Right lobe of liver (tissue), 6 donors: ENCODE measurements at regions of chr1 and their contacts with region 1.

Region 1: DNA sequence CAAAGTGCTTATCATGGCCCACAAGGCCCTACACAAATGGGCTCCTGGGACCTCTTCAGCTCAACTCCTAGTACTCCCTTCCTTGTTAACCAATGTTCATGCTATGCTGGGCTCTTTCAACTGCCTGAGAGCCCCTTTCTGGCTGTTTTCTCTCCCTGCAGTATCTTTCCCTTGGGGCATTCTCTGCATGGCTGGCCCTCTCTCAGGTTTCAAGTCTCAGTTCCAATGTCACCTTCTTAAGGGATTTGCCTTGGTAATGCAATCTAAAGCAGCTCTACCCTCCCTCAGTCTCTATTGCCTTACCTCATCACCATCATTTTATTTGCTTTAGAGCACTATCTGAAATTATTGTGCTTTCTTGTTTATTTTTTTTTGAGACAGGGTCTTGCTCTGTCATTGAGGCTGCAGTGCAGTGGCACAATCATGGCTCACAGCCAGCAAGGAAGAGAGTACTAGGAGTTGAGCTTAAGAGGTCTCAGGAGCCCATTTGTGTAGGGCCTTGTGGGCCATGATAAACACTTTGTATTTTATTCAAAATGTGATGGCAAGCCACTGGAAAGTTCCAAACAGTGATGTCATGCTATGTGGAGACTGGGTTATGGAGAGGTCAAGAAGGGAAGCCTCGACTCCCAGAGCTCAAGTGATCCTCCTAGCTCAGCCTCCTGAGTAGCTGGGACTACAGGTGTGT is 63.4 kb upstream of the SRSF10 start:
- DNase-seq: no peak
- ATAC-seq: no peak
- H3K4me3 ChIP-seq: no peak overlapping the region
- H3K27ac ChIP-seq: no peak overlapping the region
- H3K4me1 ChIP-seq: no peaks in the 10 kb centered on the region
- H3K27me3 ChIP-seq: no peaks in the 10 kb centered on the region
- CTCF ChIP-seq: no peak
- POLR2A ChIP-seq: no peak

Region 2: GRCh38 chr1:22717037-22717760 is 1326.3 kb before region 1 on chr1:
- intact Hi-C with region 1: loop called in 1 of 2 experiments (anchors 5 kb)
- DNase-seq: no peak
- ATAC-seq: peak in 2 of 4 donors; percentile 8 to 29
- H3K4me3 ChIP-seq: no peak overlapping the region
- H3K27ac ChIP-seq: no peak overlapping the region
- H3K4me1 ChIP-seq: no peaks in the 10 kb centered on the region
- H3K27me3 ChIP-seq: no peaks in the 10 kb centered on the region
- CTCF ChIP-seq: no peak
- POLR2A ChIP-seq: no peak